Mammary epithelial cell (primary cell): ENCODE measurements at regions of chr5 and their contacts with region 1.

Region 1: DNA sequence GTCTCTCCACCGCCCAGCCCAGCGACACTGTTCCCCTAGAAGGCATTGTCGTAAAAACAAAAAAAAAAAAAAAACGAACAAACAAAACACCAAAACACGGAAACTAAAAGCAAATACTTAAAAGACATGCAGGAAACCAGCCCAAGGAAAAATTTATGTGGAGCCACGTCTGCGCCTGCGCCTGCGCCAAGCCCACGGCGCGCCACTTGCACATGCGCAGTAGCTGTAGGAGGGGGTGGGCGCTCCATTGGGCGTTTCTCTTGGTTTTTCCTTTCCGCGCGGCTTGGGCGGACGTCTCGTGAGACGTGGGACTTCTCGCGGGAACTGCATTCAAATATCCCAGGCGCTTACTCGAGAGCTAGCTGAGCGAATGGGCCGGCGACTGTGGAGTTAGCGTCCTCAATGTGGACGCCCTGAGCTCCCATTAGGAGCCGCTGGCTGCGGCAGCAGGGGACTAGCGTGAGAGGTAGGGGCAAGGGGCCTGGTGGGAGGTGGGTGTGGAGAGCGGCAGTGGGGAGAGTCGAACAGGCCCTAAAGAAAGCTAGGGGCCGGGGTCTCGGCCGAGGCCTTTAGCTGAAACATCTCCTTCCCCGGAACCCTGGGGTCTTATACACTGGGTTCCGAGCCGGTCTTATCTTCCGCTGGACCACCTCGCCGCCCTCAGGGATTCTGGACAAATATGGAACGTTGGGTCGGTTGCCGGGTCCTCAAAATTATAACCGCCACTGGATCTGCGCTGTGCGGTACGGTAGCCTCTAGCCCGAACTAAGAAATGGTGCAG is at the start of gene SPDL1:
- DNase-seq: peak; percentile 93
- H3K4me3 ChIP-seq: peak within 1 kb of the TSS; percentile 85 to 98 (median 92)
- H3K27ac ChIP-seq: peak within 1 kb of the TSS; percentile 84
- H3K4me1 ChIP-seq: peaks cover 16% of the 10 kb centered on the region
- H3K27me3 ChIP-seq: no peaks in the 10 kb centered on the region
- CTCF ChIP-seq: no peak
- total RNA-seq, gene SPDL1: 7.7 to 31.1 TPM

Region 2: DNA sequence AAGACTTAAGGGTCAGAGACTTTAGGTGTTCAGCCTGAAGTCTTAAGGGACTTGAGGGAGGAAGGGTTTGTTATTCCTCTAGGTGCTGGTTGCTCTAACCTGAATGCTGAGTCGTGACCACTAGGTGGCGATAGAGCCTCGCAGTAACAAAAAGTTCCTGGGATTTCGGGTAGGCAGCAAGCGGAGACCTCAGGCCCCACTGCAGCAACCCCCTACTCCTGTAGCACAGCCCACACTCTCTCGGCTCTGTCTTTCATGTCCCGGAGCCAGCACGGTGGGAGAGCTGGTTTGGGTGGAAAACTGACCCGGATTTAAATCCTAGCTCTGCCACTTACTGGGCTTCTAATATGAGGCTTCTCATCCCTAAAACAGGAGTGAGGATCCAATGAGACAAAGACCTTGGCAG is 904.1 kb before region 1 on chr5:
- CTCF ChIA-PET with region 1: interaction called, 3 read pairs
- dilution Hi-C with region 1: no loop called
- in situ Hi-C with region 1: no loop called
- intact Hi-C with region 1: loop called (anchors 1 kb)
- DNase-seq: peak; percentile 52
- H3K4me3 ChIP-seq: no peak overlapping the region
- H3K27ac ChIP-seq: no peak overlapping the region
- H3K4me1 ChIP-seq: no peaks in the 10 kb centered on the region
- H3K27me3 ChIP-seq: no peaks in the 10 kb centered on the region
- CTCF ChIP-seq: peak; percentile 87 to 92

Region 3: DNA sequence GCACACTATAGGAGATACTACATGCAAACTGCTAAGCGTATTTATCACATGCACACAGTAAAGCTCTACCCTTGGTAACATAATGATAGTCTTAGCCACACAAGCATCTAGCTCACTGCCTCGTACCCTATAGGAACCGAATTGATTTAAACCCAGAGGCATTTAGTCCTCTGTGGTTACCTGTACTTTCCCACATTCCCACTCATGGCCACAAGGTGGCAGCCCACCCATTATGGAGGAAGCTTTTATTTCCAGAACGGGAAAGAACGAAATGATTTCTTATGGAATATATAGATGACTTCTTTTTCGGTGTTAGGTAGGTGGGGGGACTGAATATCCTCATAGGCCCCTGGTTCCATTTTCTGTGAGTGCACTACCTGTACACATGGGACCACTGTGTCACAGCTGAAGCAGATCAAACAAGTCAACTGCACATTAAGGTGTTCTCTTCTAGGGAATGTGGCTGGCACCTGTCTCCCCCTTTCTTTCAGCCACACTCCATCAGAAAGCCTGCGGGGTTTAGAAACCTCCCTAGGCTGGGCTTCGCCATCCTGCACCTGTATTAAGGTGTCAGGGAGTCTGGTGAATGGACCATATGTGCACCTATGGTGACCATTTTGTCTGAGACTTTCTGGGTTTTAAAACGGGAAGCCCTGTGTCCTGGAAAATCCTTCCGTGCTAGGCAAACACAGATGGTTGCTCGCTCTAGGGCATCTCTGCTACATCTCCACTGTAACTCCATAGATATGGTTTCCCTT is 595.9 kb before region 1 on chr5:
- CTCF ChIA-PET with region 1: no interaction called
- dilution Hi-C with region 1: no loop called
- in situ Hi-C with region 1: no loop called
- intact Hi-C with region 1: loop called (anchors 1 kb)
- DNase-seq: peak; percentile 55
- H3K4me3 ChIP-seq: no peak overlapping the region
- H3K27ac ChIP-seq: no peak overlapping the region
- H3K4me1 ChIP-seq: peaks cover 14% of the 10 kb centered on the region
- H3K27me3 ChIP-seq: no peaks in the 10 kb centered on the region
- CTCF ChIP-seq: peak; percentile 86 to 88

Region 4: GRCh38 chr5:169980418-169981053 is 396.9 kb after region 1 on chr5 and contains the start of gene INSYN2B:
- CTCF ChIA-PET with region 1: interaction called, 3 read pairs
- dilution Hi-C with region 1: no loop called
- in situ Hi-C with region 1: no loop called
- intact Hi-C with region 1: loop called (anchors 5 kb)
- DNase-seq: peak; percentile 83
- H3K4me3 ChIP-seq: peak within 1 kb of the TSS; percentile 51 to 85 (median 77)
- H3K27ac ChIP-seq: peak within 1 kb of the TSS; percentile 93
- H3K4me1 ChIP-seq: peaks cover 38% of the 10 kb centered on the region
- H3K27me3 ChIP-seq: no peaks in the 10 kb centered on the region
- CTCF ChIP-seq: peak; percentile 57 to 74
- total RNA-seq, gene INSYN2B: 2.0 to 8.7 TPM

Region 5: DNA sequence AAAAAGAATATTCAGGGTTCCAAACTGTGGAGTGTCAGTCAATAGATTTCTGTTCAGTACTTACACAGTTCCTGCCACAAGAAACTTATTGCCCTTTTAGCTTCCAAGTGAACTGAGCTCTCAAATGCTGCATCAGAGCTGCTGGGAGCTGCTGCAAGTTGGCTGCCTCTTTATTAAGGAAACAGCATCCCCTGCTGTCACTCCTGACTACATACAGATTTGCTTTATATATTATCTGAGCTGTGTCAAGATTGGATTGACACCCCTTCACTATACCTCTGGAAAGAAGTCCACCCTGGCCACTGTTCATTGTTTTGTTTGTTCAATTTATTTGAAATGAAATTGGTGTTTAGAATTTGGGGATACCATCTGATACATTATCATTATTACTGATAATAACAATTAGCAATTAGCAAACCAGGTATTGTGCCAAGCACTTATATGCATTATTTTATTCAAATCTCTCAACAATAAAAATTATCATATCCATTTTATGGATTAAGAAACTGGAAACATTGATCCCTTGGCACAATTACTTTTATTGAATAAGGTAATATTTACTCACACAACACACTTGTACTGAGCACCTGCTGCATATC is 632.8 kb after region 1 on chr5:
- CTCF ChIA-PET with region 1: no interaction called
- dilution Hi-C with region 1: no loop called
- in situ Hi-C with region 1: no loop called
- intact Hi-C with region 1: loop called (anchors 5 kb)
- DNase-seq: peak; percentile 45
- H3K4me3 ChIP-seq: no peak overlapping the region
- H3K27ac ChIP-seq: no peak overlapping the region
- H3K4me1 ChIP-seq: peaks cover 31% of the 10 kb centered on the region
- H3K27me3 ChIP-seq: no peaks in the 10 kb centered on the region
- CTCF ChIP-seq: peak; percentile 89